ENCODE measurements at regions of chr2 and their contacts with region 1.

Region 1: GRCh38 chr2:208040199-208041171 is 15.2 kb upstream of the PLEKHM3 start:
- DNase-seq: peak; percentile 93
- H3K4me3 Mint-ChIP-seq: no peak overlapping the region
- H3K27ac Mint-ChIP-seq: no peak overlapping the region
- H3K4me1 Mint-ChIP-seq: peaks cover 3% of the 10 kb centered on the region
- H3K27me3 Mint-ChIP-seq: peaks cover 2% of the 10 kb centered on the region

Region 2: GRCh38 chr2:206693399-206694137 is 1346.9 kb before region 1 on chr2:
- CTCF ChIA-PET with region 1: no interaction called
- intact Hi-C with region 1: loop called (anchors 1 kb)
- DNase-seq: peak; percentile 48
- H3K4me3 Mint-ChIP-seq: no peak overlapping the region
- H3K27ac Mint-ChIP-seq: no peak overlapping the region
- H3K4me1 Mint-ChIP-seq: peaks cover 3% of the 10 kb centered on the region
- H3K27me3 Mint-ChIP-seq: no peaks in the 10 kb centered on the region

Region 3: GRCh38 chr2:207710814-207711740 is 329.4 kb before region 1 on chr2 and contains the start of gene CCNYL1:
- CTCF ChIA-PET with region 1: interaction called, 6 read pairs
- intact Hi-C with region 1: loop called (anchors 1 kb)
- DNase-seq: peak; percentile 98
- H3K4me3 Mint-ChIP-seq: peak within 1 kb of the TSS; percentile 88
- H3K27ac Mint-ChIP-seq: peak within 1 kb of the TSS; percentile 56
- H3K4me1 Mint-ChIP-seq: peaks cover 26% of the 10 kb centered on the region
- H3K27me3 Mint-ChIP-seq: no peaks in the 10 kb centered on the region
- total RNA-seq, gene CCNYL1: 2.5 to 2.7 TPM

Region 4: DNA sequence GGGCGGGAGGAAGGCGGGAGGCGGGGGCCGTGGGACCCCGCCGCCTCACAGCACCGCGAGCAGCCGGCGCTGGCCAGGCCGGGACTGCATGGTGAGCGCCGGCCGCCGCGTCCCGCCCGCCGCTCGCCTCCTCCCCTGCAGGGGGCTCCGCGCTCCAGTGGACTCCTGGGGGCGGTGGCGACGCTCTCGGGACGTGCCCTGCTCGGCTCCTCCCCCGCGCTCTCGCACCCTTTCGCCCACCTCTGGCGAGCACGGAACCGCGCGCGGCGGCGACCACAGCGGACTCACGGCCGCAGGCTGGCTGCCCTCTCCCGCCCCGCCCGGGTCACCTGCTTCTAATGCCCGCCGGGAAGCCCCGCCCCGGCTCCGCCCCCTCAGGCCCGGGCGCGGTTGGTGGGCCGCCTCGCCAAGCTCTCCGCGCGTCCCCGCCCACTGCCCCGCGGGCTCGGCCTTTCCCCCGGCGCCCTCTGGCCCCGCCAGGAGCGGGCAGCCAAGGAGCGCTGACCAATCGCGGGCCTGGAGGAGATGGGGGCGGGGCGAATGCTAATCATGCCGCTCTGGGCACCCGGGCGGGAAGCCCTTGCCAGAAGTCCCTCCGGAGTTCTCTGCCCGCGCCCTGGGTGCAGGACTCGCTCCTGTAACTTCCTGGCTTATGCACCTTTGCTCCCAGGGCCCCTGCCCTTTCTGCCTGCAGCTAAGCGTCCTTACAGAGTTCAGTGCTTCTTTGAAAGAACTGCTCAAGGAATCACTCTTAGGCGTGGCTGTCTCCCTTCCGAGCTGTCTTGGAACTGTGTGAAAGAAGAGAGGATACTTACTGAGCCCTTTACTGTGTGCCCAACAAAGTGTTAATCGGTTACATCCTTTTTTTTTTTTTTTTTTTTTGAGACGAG is 270.6 kb before region 1 on chr2 and contains the start of gene FZD5:
- CTCF ChIA-PET with region 1: interaction called, 4 read pairs
- intact Hi-C with region 1: loop called (anchors 1 kb)
- DNase-seq: peak; percentile 91
- H3K4me3 Mint-ChIP-seq: peak within 1 kb of the TSS; percentile 80
- H3K27ac Mint-ChIP-seq: no peak within 1 kb of the TSS
- H3K4me1 Mint-ChIP-seq: peaks cover 31% of the 10 kb centered on the region
- H3K27me3 Mint-ChIP-seq: peaks cover 36% of the 10 kb centered on the region
- total RNA-seq, gene FZD5: 1.5 to 1.7 TPM

Region 5: GRCh38 chr2:207974216-207974605 is 66.3 kb before region 1 on chr2:
- CTCF ChIA-PET with region 1: interaction called, 10 read pairs
- intact Hi-C with region 1: loop called (anchors 1 kb)
- DNase-seq: no peak
- H3K4me3 Mint-ChIP-seq: no peak overlapping the region
- H3K27ac Mint-ChIP-seq: no peak overlapping the region
- H3K4me1 Mint-ChIP-seq: peaks cover 17% of the 10 kb centered on the region
- H3K27me3 Mint-ChIP-seq: no peaks in the 10 kb centered on the region

Region 6: DNA sequence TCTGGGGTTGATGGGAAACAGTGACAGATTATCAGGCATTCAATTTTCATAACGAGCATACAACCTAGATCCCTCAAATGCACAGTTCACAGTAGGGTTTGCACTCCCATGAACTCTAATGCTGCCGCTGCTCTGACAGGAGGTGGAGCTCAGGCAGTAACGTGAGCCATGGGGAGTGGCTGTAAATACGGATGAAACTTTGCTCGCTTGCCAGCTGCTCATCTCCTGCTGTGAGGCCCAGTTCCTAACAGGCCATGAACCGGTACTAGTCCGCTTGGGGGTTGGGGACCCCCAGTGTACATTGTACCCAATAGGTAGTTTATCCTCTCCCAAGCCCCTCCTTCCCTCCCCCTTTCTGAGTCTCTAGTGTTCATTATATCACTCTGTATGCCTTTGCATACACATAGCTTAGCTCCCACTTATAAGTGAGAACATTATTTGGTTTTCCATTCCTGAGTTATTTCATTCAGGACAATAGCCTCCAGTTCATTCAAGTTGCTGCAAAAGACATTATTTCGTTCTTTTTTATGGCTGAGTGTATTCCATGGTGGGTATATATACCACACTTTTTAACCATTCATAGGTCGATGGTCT is 460.8 kb after region 1 on chr2:
- CTCF ChIA-PET with region 1: no interaction called
- intact Hi-C with region 1: no loop called
- DNase-seq: no peak
- H3K4me3 Mint-ChIP-seq: no peak overlapping the region
- H3K27ac Mint-ChIP-seq: no peak overlapping the region
- H3K4me1 Mint-ChIP-seq: no peaks in the 10 kb centered on the region
- H3K27me3 Mint-ChIP-seq: no peaks in the 10 kb centered on the region